PC-3 (cell line): ENCODE measurements at regions of chr5 and their contacts with region 1.

Region 1: GRCh38 chr5:34486160-34486848 is 169.8 kb upstream of the RAI14 start:
- DNase-seq: peak; percentile 94
- ATAC-seq: peak; percentile 37
- H3K4me3 ChIP-seq: peak overlapping the region; percentile 6; the same call in 1 of the 2 replicates
- H3K27ac ChIP-seq: peak overlapping the region; percentile 90
- H3K4me1 ChIP-seq: peaks cover 52% of the 10 kb centered on the region
- H3K27me3 ChIP-seq: no peaks in the 10 kb centered on the region
- CTCF ChIP-seq: peak; percentile 96

Region 2: DNA sequence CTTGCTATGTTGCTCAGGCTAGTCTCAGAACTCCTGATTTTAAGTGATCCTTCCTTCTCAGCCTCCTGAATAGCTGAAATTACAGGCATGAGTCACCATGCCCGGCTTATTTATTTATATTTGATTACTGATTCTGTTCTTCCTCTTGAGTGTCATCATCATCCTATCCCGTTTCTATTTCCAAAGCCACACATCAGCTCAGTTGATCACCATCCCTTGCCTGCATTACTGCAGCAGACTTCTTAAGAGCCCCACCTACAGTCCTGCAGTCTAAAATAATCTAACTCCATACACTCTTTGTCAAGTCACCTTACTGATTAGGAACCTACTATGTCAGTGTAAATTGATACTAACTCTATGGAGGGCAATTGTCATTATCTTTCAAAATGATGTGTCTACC is 30.9 kb after region 1 on chr5:
- CTCF ChIA-PET with region 1: interaction called, 10 read pairs
- POLR2A ChIA-PET with region 1: interaction called, 8 read pairs
- intact Hi-C with region 1: loop called (anchors 1 kb)
- DNase-seq: peak; percentile 75
- ATAC-seq: peak; percentile 71
- H3K4me3 ChIP-seq: no peak overlapping the region
- H3K27ac ChIP-seq: no peak overlapping the region
- H3K4me1 ChIP-seq: peaks cover 39% of the 10 kb centered on the region
- H3K27me3 ChIP-seq: no peaks in the 10 kb centered on the region
- CTCF ChIP-seq: 0 out of 2 replicates have a peak, but pooled peaks have one; percentile 18

Region 3: DNA sequence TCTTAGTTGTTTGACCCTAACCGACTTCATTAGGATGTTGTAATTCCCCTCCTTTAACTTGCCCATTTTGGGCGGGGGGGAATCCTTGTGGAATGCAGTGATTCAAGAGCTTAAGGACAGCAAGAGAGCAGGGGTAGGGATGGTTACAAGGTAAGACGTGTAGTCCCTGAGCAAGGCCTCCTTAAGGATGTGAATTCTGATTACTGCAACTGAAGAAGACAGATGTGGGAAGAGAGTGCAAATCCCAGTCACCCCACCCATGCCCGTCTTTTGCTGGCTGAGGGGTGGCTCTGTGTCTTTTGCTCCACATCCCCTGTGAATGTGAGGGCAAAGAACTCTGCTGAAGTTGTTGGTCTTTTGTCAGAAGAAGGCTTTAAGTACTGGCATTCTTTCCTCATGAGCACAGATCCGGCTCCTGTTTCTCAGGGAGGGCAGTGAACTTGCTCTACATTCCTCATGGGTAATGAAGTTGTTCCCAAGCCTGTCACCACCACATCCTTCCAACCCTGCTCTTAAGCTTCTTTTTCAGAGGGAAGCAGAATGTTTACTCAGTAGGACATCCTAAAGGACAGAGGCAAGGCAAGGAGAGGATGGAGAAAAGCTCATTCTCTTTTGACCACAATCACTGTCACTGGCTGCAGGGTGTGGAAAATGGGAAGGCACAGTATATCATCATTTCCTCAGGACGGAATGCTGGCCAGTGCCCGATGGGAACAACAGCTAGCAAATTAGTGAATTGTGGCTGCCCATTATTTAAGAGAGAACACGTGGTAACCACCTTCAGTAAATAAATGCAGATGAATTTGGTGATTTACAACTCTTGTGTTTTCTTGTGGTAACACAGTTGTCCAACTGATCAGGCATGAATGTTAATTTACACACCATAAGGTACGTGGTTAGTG is 231.4 kb after region 1 on chr5:
- CTCF ChIA-PET with region 1: interaction called, 5 read pairs
- POLR2A ChIA-PET with region 1: no interaction called
- intact Hi-C with region 1: loop called (anchors 1 kb)
- DNase-seq: peak; percentile 97
- ATAC-seq: peak; percentile 88
- H3K4me3 ChIP-seq: peak overlapping the region; percentile 48; the same call in 1 of the 2 replicates
- H3K27ac ChIP-seq: peak overlapping the region; percentile 99
- H3K4me1 ChIP-seq: peaks cover 51% of the 10 kb centered on the region
- H3K27me3 ChIP-seq: no peaks in the 10 kb centered on the region
- CTCF ChIP-seq: no peak

Region 4: GRCh38 chr5:34838785-34839714 is 352.7 kb after region 1 on chr5 and contains the start of gene TTC23L:
- CTCF ChIA-PET with region 1: no interaction called
- POLR2A ChIA-PET with region 1: no interaction called
- intact Hi-C with region 1: loop called (anchors 5 kb)
- DNase-seq: peak; percentile 90
- ATAC-seq: peak; percentile 95
- H3K4me3 ChIP-seq: peak within 1 kb of the TSS; percentile 72
- H3K27ac ChIP-seq: peak within 1 kb of the TSS; percentile 11
- H3K4me1 ChIP-seq: peaks cover 4% of the 10 kb centered on the region; the same call in 1 of the 2 replicates
- H3K27me3 ChIP-seq: no peaks in the 10 kb centered on the region
- CTCF ChIP-seq: no peak
- total RNA-seq, gene TTC23L: 0.84 TPM in 1 of 2 replicates, not detected in the other

Region 5: DNA sequence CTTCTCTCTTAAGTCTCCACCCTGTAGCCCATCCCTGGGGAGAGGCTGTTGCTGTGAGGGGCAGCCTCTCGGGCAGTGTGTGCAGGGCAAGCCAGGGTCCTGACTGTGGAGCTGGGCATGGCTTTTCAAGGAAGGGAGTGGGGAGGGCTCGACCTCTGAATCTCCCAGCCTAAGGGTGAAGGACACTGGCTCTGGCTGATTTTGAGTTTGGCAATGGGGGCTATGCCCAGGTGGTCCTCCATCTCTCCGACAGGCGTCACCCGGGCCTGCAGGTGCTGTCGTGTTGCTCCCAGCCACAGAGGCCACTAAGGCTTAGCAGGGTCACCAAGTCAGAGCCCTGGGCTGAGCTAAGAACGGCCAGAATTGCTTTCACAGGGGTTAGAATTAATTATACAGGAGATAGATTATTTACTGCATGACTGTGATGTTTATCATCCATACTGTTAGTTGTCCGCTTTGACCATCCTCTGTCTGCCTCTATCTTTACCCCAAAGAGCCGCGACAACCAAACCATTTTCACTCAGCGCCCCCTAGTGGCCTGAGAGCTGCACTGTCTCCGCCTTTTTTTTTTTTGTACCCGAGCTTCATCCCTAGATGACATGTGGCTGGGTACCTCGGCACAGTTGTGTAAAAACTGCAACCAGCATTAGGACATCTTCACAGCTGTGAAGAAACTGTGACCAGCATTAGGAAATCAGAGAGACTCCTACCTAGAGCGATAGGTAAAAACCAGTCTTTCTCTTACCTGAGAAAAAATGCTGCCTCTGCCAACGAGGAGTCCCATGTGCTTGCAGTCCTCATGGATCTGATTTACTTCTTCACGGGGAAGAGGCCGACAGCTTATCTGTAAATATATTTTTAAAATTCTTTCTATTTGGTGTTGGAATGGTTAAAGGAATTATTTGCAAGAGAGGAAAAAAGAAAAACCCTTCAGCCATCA is 517.0 kb after region 1 on chr5:
- CTCF ChIA-PET with region 1: no interaction called
- POLR2A ChIA-PET with region 1: no interaction called
- intact Hi-C with region 1: loop called (anchors 5 kb)
- DNase-seq: peak; percentile 77
- ATAC-seq: peak; percentile 64
- H3K4me3 ChIP-seq: no peak overlapping the region
- H3K27ac ChIP-seq: no peak overlapping the region
- H3K4me1 ChIP-seq: no peaks in the 10 kb centered on the region
- H3K27me3 ChIP-seq: no peaks in the 10 kb centered on the region; the same call in 1 of the 2 replicates
- CTCF ChIP-seq: peak; percentile 94